Mammary epithelial cell (primary cell): ENCODE measurements at regions of chr1 and their contacts with region 1.

Region 1: DNA sequence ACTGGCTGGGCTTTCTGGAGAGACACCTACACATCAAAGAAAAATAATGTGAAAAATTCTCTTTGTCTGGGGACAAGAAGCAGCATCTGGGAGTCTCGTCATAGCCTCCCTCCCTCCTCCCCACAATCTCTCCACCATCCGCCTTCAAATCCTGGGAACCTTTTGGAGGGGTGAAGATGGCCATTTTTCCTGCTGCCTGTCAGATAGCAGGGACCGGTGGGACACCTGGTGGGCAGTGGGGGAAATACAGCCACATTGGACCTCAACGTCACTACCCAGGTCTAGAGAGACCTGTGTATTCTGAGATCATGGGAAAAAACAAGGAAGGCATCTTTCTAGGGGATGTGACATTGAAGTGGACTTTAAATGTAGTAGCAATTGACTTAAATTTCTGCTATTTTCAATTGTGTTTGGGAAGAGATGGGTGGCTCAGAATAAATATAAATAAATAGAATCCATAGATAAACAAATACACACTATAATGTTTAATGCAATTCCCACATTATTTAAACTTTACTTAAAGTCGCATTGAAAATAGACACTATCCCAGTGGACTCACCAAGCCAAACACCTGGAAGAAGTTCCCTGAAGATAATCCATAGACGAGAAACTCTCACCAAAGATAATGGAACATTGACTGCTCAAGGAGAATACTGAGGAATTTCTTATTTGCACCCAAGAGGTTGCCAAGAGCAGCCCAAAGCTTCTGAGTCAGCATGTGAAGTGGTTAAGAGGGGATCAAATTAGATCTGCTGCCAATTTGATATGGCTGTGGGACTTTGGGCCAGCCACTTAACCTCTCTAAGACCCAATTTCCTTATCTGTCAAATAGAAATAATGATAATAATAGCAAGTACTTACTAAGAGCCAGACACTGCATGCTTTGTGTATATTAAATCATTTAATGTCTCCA is 147.6 kb upstream of the CAMK1G start:
- DNase-seq: peak; percentile 80
- H3K4me3 ChIP-seq: no peak overlapping the region
- H3K27ac ChIP-seq: peak overlapping the region; percentile 99
- H3K4me1 ChIP-seq: peaks cover 51% of the 10 kb centered on the region
- H3K27me3 ChIP-seq: no peaks in the 10 kb centered on the region
- CTCF ChIP-seq: peak; percentile 92 to 97

Region 2: DNA sequence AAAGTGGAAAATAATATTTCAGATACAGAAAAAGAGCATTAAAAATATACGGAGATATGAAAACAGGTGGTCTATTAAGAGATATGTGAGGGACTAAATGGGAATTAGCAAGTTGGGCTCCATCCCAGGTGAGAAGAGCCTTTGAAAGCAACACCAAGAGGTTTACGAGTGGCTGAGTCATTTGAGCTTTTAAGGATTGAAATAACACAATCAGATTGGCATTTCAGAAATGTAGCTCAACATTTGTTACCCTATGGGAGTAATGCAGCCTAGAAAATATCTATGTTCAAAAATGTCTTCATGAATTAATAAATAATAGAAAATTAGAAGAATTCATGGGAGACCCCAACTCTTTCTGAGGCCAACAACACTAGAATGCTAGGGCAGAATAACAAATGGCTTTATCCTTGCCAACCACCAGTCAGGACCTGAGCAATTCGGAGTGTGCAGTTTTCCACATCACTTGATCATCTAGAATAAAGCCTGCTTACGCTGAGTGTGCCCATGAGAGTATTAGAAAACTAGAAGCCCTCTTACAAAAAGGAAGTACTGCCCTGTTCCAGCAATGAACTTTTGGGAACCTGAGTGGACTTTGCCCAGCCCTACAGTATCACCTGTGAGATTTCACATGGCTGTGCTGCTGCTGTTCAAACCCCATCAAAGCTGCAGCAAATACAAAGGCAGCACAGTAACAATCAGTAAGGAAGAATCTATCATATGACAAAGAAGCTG is 390.4 kb before region 1 on chr1:
- CTCF ChIA-PET with region 1: no interaction called
- dilution Hi-C with region 1: no loop called
- in situ Hi-C with region 1: no loop called
- intact Hi-C with region 1: loop called (anchors 10 kb)
- DNase-seq: peak; percentile 56
- H3K4me3 ChIP-seq: no peak overlapping the region
- H3K27ac ChIP-seq: no peak overlapping the region
- H3K4me1 ChIP-seq: peaks cover 29% of the 10 kb centered on the region
- H3K27me3 ChIP-seq: no peaks in the 10 kb centered on the region
- CTCF ChIP-seq: no peak

Region 3: GRCh38 chr1:209190591-209191261 is 245.2 kb before region 1 on chr1:
- CTCF ChIA-PET with region 1: no interaction called
- dilution Hi-C with region 1: no loop called
- in situ Hi-C with region 1: no loop called
- intact Hi-C with region 1: no loop called
- DNase-seq: peak; percentile 43
- H3K4me3 ChIP-seq: no peak overlapping the region
- H3K27ac ChIP-seq: no peak overlapping the region
- H3K4me1 ChIP-seq: no peaks in the 10 kb centered on the region
- H3K27me3 ChIP-seq: no peaks in the 10 kb centered on the region
- CTCF ChIP-seq: peak; percentile 85 to 90

Region 4: DNA sequence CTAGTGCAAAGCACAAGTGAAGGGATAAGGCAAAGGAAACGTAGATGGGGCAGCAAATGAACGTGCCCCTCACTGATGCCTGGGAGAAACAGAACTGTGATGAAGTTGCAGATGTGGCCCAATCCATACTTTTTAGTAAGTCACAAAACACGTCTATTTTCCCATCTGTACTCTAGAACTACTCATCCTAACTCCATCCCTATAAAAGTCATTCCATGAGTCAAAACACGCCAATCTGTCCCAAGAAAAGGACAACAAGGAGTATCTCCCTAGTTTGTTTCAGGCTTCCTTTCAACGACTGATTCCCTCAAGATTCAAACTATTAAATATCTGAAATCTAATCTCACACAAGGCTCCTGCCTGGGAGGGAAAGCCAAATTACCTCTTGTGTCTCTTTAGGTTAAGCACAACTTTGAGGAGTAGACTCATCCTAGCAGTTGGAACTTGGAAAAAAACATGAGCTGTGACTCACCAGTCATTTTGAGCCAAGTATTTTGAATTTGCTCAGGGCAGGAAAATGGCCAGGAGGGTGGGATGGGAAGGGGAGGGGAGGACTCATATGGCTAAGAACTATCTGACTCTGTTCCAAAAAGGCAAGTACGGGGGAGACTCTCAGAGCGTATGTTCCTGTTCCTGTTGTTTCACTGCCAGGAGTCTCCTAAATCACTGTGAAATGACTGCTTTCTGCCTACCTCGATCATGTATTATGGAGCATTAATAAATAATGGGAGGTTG is 66.9 kb before region 1 on chr1:
- CTCF ChIA-PET with region 1: no interaction called
- dilution Hi-C with region 1: no loop called
- in situ Hi-C with region 1: loop called in 1 of 2 experiments (anchors 10 kb)
- intact Hi-C with region 1: loop called (anchors 2 kb)
- DNase-seq: peak; percentile 90
- H3K4me3 ChIP-seq: no peak overlapping the region
- H3K27ac ChIP-seq: peak overlapping the region; percentile 75
- H3K4me1 ChIP-seq: peaks cover 86% of the 10 kb centered on the region
- H3K27me3 ChIP-seq: no peaks in the 10 kb centered on the region
- CTCF ChIP-seq: no peak

Region 5: DNA sequence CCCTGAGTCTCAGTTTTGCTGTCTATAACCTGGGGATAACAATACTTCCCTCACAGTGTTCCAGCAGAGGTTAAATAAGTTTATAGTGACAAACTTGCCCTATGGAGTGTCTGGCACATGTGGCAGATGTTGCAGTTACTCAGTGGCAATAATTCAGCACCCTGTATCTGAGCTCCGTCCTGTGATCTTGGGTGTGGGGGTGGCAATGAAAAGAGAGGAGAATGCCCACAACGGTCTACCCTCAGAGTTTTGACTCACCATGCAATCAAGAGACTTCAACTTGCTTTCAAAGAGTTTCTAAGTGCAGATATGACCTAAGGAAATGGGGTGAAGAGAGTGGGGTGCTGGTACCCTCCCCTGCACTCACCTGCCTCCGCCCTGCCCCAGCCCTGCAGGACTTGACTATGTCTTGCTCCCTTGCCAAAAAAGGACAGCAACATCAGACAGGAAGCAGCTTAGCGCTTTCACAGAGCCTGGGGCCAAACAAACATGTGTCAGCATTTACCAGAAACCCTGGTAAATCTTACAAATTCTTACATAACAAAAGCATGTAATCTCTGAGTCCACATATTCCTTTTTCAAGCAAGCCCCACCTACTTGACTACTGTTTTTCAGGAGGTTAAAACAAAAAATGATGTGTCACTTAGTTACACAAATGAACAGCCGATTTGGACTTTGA is 37.5 kb before region 1 on chr1:
- CTCF ChIA-PET with region 1: no interaction called
- dilution Hi-C with region 1: no loop called
- in situ Hi-C with region 1: no loop called
- intact Hi-C with region 1: loop called (anchors 1 kb)
- DNase-seq: peak; percentile 98
- H3K4me3 ChIP-seq: no peak overlapping the region
- H3K27ac ChIP-seq: peak overlapping the region; percentile 99
- H3K4me1 ChIP-seq: peaks cover 63% of the 10 kb centered on the region
- H3K27me3 ChIP-seq: no peaks in the 10 kb centered on the region
- CTCF ChIP-seq: no peak

Region 6: GRCh38 chr1:209513226-209513625 is 77.3 kb after region 1 on chr1:
- CTCF ChIA-PET with region 1: no interaction called
- dilution Hi-C with region 1: no loop called
- in situ Hi-C with region 1: no loop called
- intact Hi-C with region 1: loop called (anchors 1 kb)
- DNase-seq: peak; percentile 55
- H3K4me3 ChIP-seq: no peak overlapping the region
- H3K27ac ChIP-seq: no peak overlapping the region
- H3K4me1 ChIP-seq: no peaks in the 10 kb centered on the region
- H3K27me3 ChIP-seq: no peaks in the 10 kb centered on the region
- CTCF ChIP-seq: peak; percentile 80 to 85